AG04449 (cell line): ENCODE measurements at regions of chr1 and their contacts with region 1.

Region 1: DNA sequence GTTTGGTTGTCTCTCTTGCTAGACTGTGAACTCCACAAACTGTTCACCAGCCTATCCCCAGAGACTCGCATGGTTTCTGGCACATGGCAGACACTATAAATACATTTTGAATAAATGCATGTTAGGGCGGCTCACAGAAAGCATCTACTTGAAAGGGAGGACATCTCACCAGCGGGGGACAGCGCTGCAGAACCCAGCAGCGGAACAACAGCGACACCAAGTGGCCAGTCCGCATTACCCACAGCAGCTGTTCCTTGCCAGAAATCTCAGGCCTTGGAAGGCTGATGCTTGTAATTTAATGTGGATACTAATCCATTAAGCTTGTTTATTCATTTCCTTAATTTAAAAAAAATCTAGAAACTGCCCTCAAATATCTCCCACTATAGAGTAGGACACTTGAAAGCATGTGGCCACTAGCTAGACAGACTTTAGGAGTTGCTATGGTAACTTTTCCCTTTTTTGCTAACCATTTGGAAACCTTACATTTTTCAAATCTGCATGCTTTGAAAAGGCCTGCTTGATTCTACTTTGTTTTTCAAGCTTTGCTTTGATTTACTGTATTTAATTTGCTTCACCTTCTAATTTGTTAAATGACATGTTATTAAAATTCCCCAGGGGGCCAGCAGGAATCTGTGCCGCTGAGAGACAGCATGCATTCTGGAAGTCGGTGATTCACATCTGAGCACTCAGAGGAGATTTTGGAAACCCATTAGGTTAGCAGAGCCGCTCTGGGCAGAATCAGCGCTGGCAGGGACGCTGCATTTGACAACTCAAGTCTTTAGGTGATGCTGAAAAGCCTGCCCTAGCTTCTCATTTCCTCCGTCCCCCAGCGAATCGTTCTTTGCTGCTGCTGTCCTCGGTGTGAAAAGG is 63.5 kb upstream of the SSX2IP start:
- DNase-seq: peak; percentile 51
- H3K4me3 ChIP-seq: no peak overlapping the region
- CTCF ChIP-seq: peak; percentile 91

Region 2: GRCh38 chr1:84433258-84434080 is 320.3 kb before region 1 on chr1:
- CTCF ChIA-PET with region 1: interaction called, 11 read pairs
- POLR2A ChIA-PET with region 1: no interaction called
- DNase-seq: peak; percentile 16
- H3K4me3 ChIP-seq: no peak overlapping the region; the same call in 1 of the 2 replicates
- CTCF ChIP-seq: peak; percentile 62

Region 3: DNA sequence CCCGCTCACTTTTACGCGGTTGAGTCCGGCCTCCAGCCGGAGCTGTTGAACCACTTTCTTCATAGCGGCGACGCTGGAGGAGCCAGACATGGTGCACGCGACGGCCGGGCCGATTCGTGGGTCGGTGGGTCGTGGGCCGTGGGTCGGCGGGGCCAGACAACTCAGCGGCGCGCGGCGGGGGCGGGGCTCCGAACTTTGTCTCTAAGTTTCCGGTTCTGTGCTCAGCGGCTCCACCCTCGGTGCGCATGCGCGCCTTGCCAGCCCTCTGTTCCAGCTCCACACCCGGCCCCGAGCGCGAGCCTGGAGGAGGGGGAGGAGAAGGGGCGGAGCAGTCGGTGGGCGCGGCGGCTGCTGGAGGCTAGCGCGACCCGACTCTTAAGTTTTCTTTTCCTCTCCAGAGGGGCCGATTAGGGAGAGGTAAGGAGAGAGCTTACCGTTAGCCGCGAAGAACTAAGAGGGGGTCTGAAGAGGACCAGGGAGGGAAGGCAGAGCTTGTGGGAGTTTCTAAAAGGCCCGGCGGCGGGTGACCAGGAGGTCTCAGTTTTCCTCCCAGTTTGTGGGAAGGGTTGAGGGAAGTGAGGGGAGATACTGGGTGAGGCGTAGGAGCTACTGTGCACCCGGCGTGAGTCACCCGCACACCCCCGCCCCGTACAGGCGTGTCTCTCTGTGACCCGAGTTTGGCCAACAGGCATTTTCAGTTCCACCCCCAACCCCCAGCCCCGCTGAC is 247.6 kb before region 1 on chr1 and contains the starts of genes GNG5 and SPATA1:
- CTCF ChIA-PET with region 1: interaction called, 14 read pairs
- POLR2A ChIA-PET with region 1: interaction called, 3 read pairs
- DNase-seq: peak; percentile 56
- H3K4me3 ChIP-seq: peak within 1 kb of the TSS; percentile 92
- CTCF ChIP-seq: no peak

Region 4: GRCh38 chr1:84598846-84599741 is 154.7 kb before region 1 on chr1:
- CTCF ChIA-PET with region 1: interaction called, 13 read pairs
- POLR2A ChIA-PET with region 1: no interaction called
- DNase-seq: no peak
- H3K4me3 ChIP-seq: peak overlapping the region; percentile 28
- CTCF ChIP-seq: no peak

Region 5: DNA sequence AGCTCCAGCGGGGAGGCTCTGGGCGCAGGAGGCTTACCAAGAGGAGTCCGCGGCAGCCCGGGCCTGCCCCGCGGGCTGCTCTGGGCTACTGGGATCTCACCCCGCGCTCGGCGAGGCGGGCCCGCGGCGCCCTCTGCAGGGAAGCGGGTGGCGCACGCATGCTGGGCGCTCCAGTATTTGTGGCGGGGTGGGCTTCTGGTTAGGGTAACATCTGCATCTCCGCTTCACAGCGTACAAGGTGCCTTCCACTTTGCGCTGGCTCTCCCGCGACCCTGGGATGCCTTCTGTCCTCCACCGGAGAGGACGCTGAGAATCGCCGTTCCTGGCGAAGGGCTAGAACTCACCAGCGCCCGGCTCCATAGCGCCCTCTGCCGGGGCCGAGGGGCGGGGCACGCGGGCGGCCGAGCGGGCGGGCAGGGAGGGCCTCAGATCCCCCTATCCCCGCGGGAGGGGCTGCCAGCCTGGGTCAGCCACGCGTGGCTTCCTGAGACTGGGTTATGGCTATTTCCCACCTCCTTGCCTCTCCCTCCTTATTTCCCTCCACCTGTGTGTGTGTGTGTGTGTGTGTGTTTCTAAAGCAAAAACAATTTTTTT is 132.9 kb before region 1 on chr1:
- CTCF ChIA-PET with region 1: interaction called, 32 read pairs
- POLR2A ChIA-PET with region 1: no interaction called
- DNase-seq: no peak
- H3K4me3 ChIP-seq: peak overlapping the region; percentile 69
- CTCF ChIP-seq: peak; percentile 79

Region 6: GRCh38 chr1:84721152-84721551 is 32.6 kb before region 1 on chr1:
- CTCF ChIA-PET with region 1: no interaction called
- POLR2A ChIA-PET with region 1: no interaction called
- DNase-seq: no peak
- H3K4me3 ChIP-seq: no peak overlapping the region
- CTCF ChIP-seq: no peak

Region 7: DNA sequence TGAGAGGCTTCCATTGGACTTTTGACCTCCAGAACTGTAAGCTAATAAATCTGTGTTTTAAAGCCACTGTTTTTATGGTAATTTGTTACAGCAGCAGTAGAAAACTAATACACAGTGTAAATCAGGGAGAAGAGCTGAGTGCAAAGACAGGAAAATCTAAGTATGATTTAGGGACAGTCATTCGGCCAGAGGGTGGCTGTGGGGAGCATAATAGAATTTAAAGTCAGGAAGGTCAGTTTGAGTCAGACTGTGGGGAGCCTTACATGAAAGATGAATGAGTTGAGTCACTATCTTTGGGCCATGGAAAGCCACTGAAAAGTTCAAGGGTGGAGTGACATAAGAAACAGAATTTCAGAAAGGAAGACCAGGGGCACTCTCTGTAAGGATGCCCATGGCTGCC is 11.1 kb before region 1 on chr1:
- CTCF ChIA-PET with region 1: interaction called, 33 read pairs
- POLR2A ChIA-PET with region 1: no interaction called
- DNase-seq: no peak
- H3K4me3 ChIP-seq: no peak overlapping the region
- CTCF ChIP-seq: no peak

Region 8: DNA sequence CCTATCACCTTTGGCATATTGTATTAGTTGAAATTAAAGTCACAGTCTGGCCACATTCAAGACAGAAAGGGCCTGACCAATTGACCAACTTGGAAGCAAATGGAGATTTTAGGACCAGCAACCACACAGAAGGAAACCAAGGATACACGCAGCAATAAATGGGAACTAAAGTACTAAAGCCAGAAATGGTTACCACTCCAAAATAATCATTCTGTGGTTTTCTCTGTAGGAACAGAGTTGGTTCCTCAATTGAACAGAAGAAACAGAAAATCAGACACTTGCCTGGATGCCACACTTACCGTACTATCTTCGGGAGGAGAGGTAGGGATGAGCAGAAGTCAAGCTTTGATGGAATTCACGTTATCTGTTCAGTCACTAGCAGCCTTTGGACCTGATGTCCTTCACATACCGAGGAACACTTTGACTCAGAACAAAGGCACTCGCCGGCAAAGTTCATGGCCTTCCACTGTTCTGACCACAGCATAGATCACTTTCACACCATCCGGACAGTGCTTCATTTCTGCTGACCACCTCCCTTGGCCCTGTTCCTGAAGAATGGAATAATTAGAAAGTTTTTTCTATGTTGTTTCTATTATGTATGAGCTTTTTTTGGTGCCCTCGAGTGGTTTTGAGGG is 42.3 kb after region 1 on chr1:
- CTCF ChIA-PET with region 1: no interaction called
- POLR2A ChIA-PET with region 1: no interaction called
- DNase-seq: no peak
- H3K4me3 ChIP-seq: no peak overlapping the region
- CTCF ChIP-seq: no peak

Region 9: DNA sequence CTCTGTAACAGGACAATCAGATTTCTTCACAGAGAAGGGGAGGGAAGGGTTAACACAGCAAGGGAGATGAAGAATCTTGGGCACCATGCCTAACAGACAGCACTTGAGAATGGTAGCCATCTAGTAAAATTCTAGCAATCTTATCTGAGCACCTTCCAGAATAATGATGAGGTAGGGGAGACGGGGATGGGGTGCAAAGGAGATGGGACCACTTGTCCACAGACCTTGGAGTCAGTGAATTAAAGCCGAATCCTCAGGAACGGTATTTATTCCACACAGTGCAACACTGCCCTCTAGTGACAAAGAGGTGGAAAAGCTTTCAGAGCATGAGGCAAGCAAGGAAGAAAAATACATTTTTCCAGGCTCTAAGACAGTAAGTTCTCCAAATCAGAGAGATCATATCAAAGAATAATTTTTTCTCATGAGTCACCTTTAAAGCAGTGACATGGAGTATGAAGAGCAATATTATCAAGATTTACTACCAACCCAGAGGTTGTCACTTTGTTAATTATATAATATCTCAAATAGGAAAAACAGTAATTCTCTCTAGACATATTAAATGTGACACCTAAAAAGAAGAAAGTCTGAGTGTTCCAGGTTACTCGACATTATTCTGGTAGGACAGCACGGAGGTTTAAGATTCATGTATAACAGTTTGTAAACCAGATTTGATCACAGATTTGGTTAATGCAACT is 182.5 kb after region 1 on chr1:
- CTCF ChIA-PET with region 1: interaction called, 69 read pairs
- POLR2A ChIA-PET with region 1: interaction called, 3 read pairs
- DNase-seq: no peak
- H3K4me3 ChIP-seq: no peak overlapping the region
- CTCF ChIP-seq: peak; percentile 85

Region 10: DNA sequence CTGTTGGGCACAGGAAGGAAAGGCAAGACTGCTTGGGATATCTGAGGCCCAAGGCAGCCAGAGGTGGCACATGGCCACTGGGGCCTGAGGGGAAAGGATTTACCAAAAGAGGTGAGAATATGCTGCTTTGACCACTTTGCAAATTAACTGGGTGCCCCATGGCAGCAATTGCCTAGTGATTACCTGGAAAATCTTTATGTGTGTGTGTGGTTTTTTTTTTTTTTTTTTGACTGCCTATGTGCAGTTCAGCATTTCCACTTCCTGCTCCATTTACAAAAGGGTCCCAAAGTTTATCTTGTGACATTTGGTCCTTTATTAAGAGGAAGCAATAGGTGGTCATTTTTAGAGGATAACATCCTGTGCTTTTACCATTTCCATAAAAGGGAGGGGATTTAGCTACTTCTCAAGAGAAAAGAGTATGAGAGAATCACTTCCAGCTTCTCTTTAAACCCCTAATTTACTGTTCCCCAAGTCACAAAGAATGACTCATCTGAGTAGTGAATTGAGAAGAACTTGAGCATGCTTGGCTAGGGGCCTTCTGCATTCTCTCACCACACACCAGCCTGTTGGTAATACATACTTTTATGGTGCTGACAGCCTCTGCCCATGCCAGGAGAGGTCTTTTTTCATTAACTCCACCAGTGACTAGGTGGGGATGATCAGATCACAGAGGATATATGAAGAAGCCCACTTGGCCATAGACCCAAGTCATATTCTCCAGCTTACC is 394.9 kb after region 1 on chr1:
- CTCF ChIA-PET with region 1: no interaction called
- POLR2A ChIA-PET with region 1: no interaction called
- DNase-seq: peak; percentile 64
- H3K4me3 ChIP-seq: no peak overlapping the region
- CTCF ChIP-seq: no peak